Activated naive CD4-positive, alpha-beta T cell treated with anti-CD3 and anti-CD28 coated beads for 36 hours (primary cell): ENCODE measurements at regions of chr9 and their contacts with region 1.

Region 1: GRCh38 chr9:27365707-27366376 is 68.9 kb upstream of the EQTN start:
- DNase-seq: peak; percentile 85
- H3K4me3 Mint-ChIP-seq: no peak overlapping the region
- H3K27ac Mint-ChIP-seq: peak overlapping the region; percentile 87
- H3K4me1 Mint-ChIP-seq: peaks cover 40% of the 10 kb centered on the region
- H3K27me3 Mint-ChIP-seq: peaks cover 6% of the 10 kb centered on the region

Region 2: DNA sequence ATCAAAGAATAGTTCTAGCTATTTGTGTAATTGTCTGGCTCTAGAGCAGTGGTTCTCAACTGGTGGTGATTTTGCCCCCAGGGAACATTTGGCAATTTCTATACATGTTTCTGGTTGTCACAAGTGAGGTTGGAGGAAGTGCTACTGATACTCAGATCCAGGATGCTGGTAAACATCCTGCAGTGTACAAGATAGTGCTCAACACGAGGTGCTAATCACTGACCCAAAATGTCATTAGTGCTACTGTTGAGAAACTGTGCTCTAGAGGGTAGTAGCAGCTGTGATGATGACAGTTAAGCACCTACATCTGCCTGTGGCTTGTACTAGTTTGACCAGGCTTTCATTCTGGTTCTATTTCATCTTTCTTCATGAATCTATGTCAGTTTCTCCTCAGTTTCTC is 382.5 kb before region 1 on chr9:
- CTCF ChIA-PET with region 1: no interaction called
- intact Hi-C with region 1: no loop called
- DNase-seq: no peak
- H3K4me3 Mint-ChIP-seq: no peak overlapping the region
- H3K27ac Mint-ChIP-seq: no peak overlapping the region
- H3K4me1 Mint-ChIP-seq: no peaks in the 10 kb centered on the region
- H3K27me3 Mint-ChIP-seq: no peaks in the 10 kb centered on the region

Region 3: GRCh38 chr9:27333241-27334052 is 32.4 kb before region 1 on chr9:
- CTCF ChIA-PET with region 1: interaction called, 10 read pairs
- intact Hi-C with region 1: no loop called
- DNase-seq: peak; percentile 65
- H3K4me3 Mint-ChIP-seq: no peak overlapping the region
- H3K27ac Mint-ChIP-seq: no peak overlapping the region
- H3K4me1 Mint-ChIP-seq: peaks cover 6% of the 10 kb centered on the region
- H3K27me3 Mint-ChIP-seq: peaks cover 2% of the 10 kb centered on the region

Region 4: GRCh38 chr9:27447031-27447683 is 81.3 kb after region 1 on chr9:
- CTCF ChIA-PET with region 1: no interaction called
- intact Hi-C with region 1: loop called (anchors 2 kb)
- DNase-seq: no peak
- H3K4me3 Mint-ChIP-seq: no peak overlapping the region
- H3K27ac Mint-ChIP-seq: no peak overlapping the region
- H3K4me1 Mint-ChIP-seq: peaks cover 13% of the 10 kb centered on the region
- H3K27me3 Mint-ChIP-seq: no peaks in the 10 kb centered on the region

Region 5: GRCh38 chr9:27505744-27506161 is 139.9 kb after region 1 on chr9:
- CTCF ChIA-PET with region 1: no interaction called
- intact Hi-C with region 1: loop called (anchors 1 kb)
- DNase-seq: peak; percentile 65
- H3K4me3 Mint-ChIP-seq: no peak overlapping the region
- H3K27ac Mint-ChIP-seq: peak overlapping the region; percentile 17
- H3K4me1 Mint-ChIP-seq: peaks cover 52% of the 10 kb centered on the region
- H3K27me3 Mint-ChIP-seq: peaks cover 1% of the 10 kb centered on the region

Region 6: DNA sequence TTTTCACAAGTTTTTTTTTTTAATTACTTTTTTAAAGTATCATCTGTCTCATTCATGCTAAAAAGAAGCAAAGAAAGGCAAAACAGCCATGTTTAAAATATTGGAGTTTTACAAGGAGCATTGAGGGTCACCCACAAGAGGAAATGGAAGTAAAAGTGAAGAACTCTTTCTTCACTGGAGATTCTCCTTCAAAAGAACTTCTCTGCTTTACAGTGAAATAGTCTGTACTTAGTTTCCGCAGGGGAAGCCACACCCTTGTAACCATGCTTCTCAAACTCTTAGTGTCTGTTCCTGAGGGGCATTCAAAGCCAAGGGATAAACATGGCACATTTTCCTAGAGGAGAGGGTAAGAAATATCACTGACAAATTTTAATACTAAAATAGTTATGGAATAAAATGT is 198.8 kb after region 1 on chr9:
- CTCF ChIA-PET with region 1: interaction called, 3 read pairs
- intact Hi-C with region 1: loop called (anchors 2 kb)
- DNase-seq: no peak
- H3K4me3 Mint-ChIP-seq: no peak overlapping the region
- H3K27ac Mint-ChIP-seq: peak overlapping the region; percentile 35
- H3K4me1 Mint-ChIP-seq: peaks cover 38% of the 10 kb centered on the region
- H3K27me3 Mint-ChIP-seq: no peaks in the 10 kb centered on the region